GM10248 (cell line): ENCODE measurements at regions of chr2 and their contacts with region 1.

Region 1: GRCh38 chr2:20225294-20226151 is 593 bp upstream of the SDC1 start:
- DNase-seq: peak; percentile 84
- CTCF ChIP-seq: peak; percentile 93

Region 2: DNA sequence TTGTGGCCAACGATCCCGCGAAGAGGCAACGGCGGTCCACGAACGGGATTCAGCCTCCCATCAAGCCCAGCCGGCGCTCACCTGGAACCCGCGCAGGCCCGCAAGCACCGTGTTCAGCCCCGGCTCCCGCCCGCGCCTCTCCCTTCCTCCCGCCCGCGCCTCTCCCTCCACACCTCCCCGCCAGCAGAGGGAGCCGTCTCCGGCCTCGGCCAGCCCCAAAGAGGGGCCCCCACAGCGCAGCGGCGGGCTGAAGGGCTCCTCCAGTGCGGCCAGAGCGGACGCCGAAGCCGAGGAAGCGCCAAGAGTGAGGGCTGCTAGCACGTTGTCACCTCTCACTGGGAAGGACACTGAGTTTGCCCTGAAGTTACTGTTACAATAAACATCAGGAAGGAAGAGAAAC is 118.8 kb before region 1 on chr2:
- CTCF ChIA-PET with region 1: interaction called, 21 read pairs
- POLR2A ChIA-PET with region 1: no interaction called
- DNase-seq: no peak
- CTCF ChIP-seq: peak; percentile 35

Region 3: GRCh38 chr2:20122908-20123307 is 102.6 kb before region 1 on chr2:
- CTCF ChIA-PET with region 1: interaction called, 10 read pairs
- POLR2A ChIA-PET with region 1: no interaction called
- DNase-seq: no peak
- CTCF ChIP-seq: no peak

Region 4: GRCh38 chr2:20145497-20146193 is 79.9 kb before region 1 on chr2:
- CTCF ChIA-PET with region 1: interaction called, 128 read pairs
- POLR2A ChIA-PET with region 1: no interaction called
- DNase-seq: peak; percentile 73
- CTCF ChIP-seq: no peak

Region 5: GRCh38 chr2:20207051-20207450 is 18.5 kb before region 1 on chr2:
- CTCF ChIA-PET with region 1: interaction called, 33 read pairs
- POLR2A ChIA-PET with region 1: interaction called, 3 read pairs
- DNase-seq: peak; percentile 52
- CTCF ChIP-seq: no peak

Region 6: DNA sequence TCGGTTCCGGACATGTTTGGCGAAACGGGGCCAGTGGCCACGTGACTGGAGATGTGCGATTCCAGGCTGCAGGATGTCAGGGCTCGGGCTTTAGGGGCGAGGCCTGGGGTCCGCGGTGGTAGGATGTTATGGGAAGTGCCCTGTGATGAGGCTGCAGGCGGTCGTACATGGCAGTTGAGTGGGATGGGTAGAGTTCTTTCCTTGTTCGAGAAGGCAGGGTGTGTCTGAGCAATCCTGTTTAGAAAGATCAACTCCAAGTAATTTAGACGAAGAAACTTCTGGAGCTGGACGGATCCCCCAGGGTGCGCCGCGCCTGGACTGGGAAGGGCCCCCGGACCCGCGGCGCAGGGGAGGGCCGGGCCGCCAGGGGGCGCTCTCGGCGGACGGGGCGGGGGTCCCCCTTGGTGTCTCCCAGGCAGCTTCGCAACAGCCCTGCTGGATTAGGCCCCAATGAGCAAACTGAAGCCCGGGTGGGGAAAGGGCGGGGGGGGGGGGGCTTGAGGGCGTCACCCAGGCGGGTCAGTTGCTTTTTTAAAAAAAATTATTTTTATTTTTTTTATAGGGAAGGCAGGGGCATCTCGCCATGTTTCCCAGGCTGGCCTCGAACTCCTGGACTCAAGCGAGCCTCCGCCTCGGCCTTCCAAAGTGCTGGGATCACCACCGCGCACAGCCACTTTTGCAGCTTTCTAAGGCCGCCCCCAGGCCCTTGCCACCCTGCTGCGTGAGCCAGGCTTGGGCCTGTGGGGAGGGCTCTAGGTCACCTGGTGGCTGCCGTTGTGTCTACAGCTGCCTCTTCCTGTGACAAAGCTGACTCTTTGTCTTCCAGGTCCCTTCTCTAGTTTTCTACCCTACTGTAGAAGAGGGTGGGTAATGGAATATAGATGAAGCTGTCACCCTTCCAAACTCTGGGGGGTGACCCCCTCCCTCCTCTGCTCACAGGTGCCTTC is 16.8 kb after region 1 on chr2:
- CTCF ChIA-PET with region 1: interaction called, 38 read pairs
- POLR2A ChIA-PET with region 1: no interaction called
- DNase-seq: peak; percentile 77
- CTCF ChIP-seq: peak; percentile 55

Region 7: DNA sequence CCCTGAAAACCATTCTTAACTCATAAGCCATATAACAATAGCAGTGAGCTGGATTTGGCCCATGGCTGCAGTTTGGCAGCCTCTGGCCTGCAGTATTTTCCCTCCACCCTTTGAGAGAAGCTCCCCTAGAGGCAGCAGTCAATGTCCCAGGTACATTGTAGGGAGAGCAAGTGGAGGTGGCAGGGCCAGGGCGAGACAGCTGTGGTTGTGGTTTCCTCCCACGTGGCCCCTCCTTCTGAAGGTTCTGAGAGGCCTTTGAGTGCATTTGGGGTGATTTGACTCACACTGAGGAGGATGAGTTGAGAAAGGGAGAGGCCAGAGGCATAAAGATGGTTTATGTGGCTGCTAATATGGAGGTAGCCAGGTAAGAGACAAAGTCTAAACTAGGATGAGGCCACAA is 642.9 kb after region 1 on chr2:
- CTCF ChIA-PET with region 1: no interaction called
- POLR2A ChIA-PET with region 1: no interaction called
- DNase-seq: peak; percentile 60
- CTCF ChIP-seq: no peak